Calu3 (cell line): ENCODE measurements at regions of chr20 and their contacts with region 1.

Region 1: GRCh38 chr20:31496761-31497295 is 17.4 kb upstream of the HM13 start:
- DNase-seq: peak; percentile 44
- H3K4me3 Mint-ChIP-seq: no peak overlapping the region
- H3K27ac Mint-ChIP-seq: no peak overlapping the region
- H3K4me1 Mint-ChIP-seq: peaks cover 8% of the 10 kb centered on the region
- H3K27me3 Mint-ChIP-seq: peaks cover 74% of the 10 kb centered on the region
- CTCF ChIP-seq: no peak

Region 2: GRCh38 chr20:31308535-31309162 is 188.2 kb before region 1 on chr20 and contains the start of gene DEFB116:
- CTCF ChIA-PET with region 1: no interaction called
- intact Hi-C with region 1: loop called (anchors 5 kb)
- DNase-seq: no peak
- H3K4me3 Mint-ChIP-seq: no peak within 1 kb of the TSS
- H3K27ac Mint-ChIP-seq: no peak within 1 kb of the TSS
- H3K4me1 Mint-ChIP-seq: no peaks in the 10 kb centered on the region
- H3K27me3 Mint-ChIP-seq: no peaks in the 10 kb centered on the region
- CTCF ChIP-seq: no peak
- total RNA-seq, gene DEFB116: not detected in 2 replicates